Aorta (tissue), 5 donors: ENCODE measurements at regions of chr2 and their contacts with region 1.

Region 1: GRCh38 chr2:134411828-134412638 is 158.2 kb downstream of the MGAT5 start:
- DNase-seq: peak; percentile 76 to 80
- ATAC-seq: peak; percentile 95
- H3K4me3 ChIP-seq: no peak overlapping the region
- H3K27ac ChIP-seq: no peak overlapping the region
- H3K4me1 ChIP-seq: no peaks in the 10 kb centered on the region
- H3K27me3 ChIP-seq: no peaks in the 10 kb centered on the region

Region 2: DNA sequence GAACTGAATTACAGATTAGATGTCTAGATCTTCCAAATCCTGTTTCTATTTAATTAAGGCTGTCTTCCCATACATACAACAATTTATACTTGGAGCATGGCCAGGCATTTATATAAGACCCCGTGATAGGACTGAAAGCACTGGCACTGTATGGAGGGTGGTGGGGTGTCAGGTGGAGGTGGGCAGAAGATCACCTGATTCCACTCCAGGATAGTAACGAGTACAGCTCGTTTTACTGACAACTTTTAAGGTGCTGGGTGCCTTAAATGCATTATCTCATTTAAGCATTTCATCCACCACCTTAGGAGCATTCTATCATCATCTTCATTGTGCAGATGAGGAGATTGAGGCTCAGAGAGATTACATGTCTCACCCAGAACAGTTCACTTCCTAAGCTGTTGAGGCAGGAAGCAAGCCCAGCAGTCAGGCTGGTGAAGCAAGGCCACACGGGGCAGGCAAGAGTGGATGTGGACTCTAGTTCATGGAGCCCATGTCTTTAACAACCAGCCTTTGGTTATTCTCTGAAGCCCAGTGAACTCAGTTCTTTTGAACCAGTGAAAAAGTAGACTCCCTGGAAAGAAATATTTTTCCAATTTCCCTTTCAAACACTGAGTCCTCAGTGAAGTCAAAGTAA is 453.1 kb before region 1 on chr2:
- intact Hi-C with region 1: no loop called
- DNase-seq: no peak
- ATAC-seq: no peak
- H3K4me3 ChIP-seq: no peak overlapping the region
- H3K27ac ChIP-seq: no peak overlapping the region
- H3K4me1 ChIP-seq: no peaks in the 10 kb centered on the region
- H3K27me3 ChIP-seq: no peaks in the 10 kb centered on the region

Region 3: DNA sequence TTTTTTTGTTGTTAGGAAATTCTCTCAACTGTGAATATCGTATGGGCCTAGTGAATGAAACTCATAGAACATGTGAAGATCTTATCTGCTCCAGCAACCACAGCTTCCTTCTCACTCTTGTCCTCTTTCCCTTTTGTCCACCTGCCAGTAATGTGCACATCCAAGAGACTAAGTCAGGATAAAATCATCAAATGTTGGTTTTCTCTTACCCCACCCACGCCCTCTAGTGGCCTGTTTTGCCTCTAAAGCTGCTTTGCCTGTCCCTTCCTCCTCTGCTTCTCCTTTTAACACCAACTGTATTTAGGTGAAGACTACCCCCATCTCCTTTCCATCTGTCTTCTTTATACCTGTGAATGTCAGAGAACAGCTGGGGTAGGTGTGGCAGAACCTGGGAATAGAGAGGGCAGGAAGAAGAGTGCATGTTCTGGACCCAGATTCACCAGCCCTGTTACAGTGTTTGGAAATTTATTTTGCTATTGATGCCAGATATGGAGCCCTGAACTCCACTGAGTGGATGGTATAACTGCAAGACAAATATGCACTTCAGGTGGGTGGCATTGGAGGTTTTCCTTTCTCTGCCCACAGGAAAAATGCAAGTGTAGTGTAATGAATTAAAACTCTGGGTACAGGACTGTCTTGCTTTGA is 166.6 kb before region 1 on chr2:
- intact Hi-C with region 1: loop called in 1 of 2 experiments (anchors 5 kb)
- DNase-seq: peak; percentile 87 to 88
- ATAC-seq: peak; percentile 81
- H3K4me3 ChIP-seq: no peak overlapping the region
- H3K27ac ChIP-seq: no peak overlapping the region
- H3K4me1 ChIP-seq: no peaks in the 10 kb centered on the region
- H3K27me3 ChIP-seq: no peaks in the 10 kb centered on the region

Region 4: DNA sequence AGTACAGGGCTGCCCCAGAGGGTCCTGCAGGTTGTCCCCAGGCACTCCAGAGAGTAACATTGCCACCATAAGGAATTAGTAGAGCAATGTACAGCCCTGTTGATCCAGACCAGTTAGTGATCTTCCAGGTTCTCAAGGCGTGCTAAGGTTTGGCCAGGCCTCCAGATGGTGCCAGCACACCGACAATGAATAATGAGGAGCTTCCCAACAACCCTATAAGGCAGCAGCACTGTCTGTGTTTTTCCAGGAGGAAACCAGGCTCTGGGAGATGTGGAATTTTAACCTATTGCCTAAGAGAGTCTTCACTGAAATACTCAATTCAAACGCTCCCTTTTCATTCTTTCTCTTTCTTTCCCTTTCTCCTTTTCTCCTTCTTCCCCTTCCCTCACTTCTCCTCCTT is 36.1 kb before region 1 on chr2:
- intact Hi-C with region 1: loop called (anchors 5 kb)
- DNase-seq: no peak
- ATAC-seq: peak; percentile 69
- H3K4me3 ChIP-seq: no peak overlapping the region
- H3K27ac ChIP-seq: no peak overlapping the region
- H3K4me1 ChIP-seq: no peaks in the 10 kb centered on the region
- H3K27me3 ChIP-seq: no peaks in the 10 kb centered on the region

Region 5: DNA sequence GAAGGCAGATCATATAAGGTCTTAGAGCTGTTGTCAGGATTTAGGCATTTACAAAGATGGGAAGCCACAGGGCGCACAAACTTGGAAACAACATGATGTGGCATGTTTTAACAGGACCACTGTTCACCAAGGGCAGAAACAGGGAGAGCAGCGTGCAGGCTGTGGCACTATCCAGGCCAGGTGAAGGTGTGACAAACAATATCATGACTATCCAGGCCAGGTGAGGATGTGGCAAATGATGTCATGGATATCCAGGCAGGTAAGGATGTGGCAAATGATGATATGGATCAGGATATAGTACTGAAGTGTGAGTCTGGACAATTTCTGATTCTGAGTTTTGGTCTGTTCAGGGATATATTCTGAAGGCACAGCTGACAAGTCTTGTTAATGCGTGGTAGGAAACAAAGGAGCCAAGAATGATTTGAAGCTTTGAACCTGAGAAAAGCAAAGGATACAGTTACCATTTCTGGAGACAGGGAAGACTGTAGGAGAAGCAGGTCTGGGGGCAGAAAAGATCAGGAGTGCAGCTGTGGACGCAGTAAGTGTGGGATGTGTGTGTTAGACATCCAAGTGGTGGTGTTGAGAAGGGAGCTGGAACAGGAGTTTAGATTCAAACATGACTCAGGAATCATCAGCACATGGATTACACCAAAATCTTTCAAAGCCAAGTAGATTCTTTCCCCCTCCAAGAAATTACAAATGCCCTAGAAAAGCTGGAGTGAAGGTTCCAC is 100.9 kb after region 1 on chr2:
- intact Hi-C with region 1: no loop called
- DNase-seq: no peak
- ATAC-seq: no peak
- H3K4me3 ChIP-seq: no peak overlapping the region
- H3K27ac ChIP-seq: no peak overlapping the region
- H3K4me1 ChIP-seq: no peaks in the 10 kb centered on the region
- H3K27me3 ChIP-seq: no peaks in the 10 kb centered on the region